ENCODE measurements at regions of chr1 and their contacts with region 1.

Region 1: GRCh38 chr1:22611530-22611947 is 24.9 kb upstream of the C1QA start:
- DNase-seq: peak; percentile 89
- ATAC-seq: peak; percentile 83
- H3K4me3 Mint-ChIP-seq: no peak overlapping the region
- H3K27ac Mint-ChIP-seq: no peak overlapping the region
- H3K4me1 Mint-ChIP-seq: peaks cover 8% of the 10 kb centered on the region
- H3K27me3 Mint-ChIP-seq: peaks cover 3% of the 10 kb centered on the region; the same call in 1 of the 2 replicates
- CTCF ChIP-seq: no peak

Region 2: GRCh38 chr1:22527555-22528296 is 83.8 kb before region 1 on chr1:
- CTCF ChIA-PET with region 1: interaction called, 10 read pairs
- POLR2A ChIA-PET with region 1: interaction called, 4 read pairs
- DNase-seq: no peak
- ATAC-seq: peak; percentile 38; the same call in 1 of the 2 replicates
- H3K4me3 Mint-ChIP-seq: no peak overlapping the region
- H3K27ac Mint-ChIP-seq: no peak overlapping the region; the same call in 1 of the 2 replicates
- H3K4me1 Mint-ChIP-seq: no peaks in the 10 kb centered on the region
- H3K27me3 Mint-ChIP-seq: no peaks in the 10 kb centered on the region
- CTCF ChIP-seq: no peak

Region 3: GRCh38 chr1:22749919-22750688 is 138.6 kb after region 1 on chr1:
- CTCF ChIA-PET with region 1: no interaction called
- POLR2A ChIA-PET with region 1: no interaction called
- DNase-seq: no peak
- ATAC-seq: no peak
- H3K4me3 Mint-ChIP-seq: no peak overlapping the region
- H3K27ac Mint-ChIP-seq: no peak overlapping the region
- H3K4me1 Mint-ChIP-seq: 0 out of 2 replicates have a peak, but pooled peaks cover 4% of the 10 kb centered on the region
- H3K27me3 Mint-ChIP-seq: no peaks in the 10 kb centered on the region
- CTCF ChIP-seq: no peak

Measured in WTC11 (cell line).